Left ventricle myocardium inferior (tissue), 1 donor: ENCODE measurements at regions of chr6 and their contacts with region 1.

Region 1: GRCh38 chr6:38493931-38494547 is 145.7 kb downstream of the BTBD9 start:
- DNase-seq: peak; percentile 47
- H3K4me3 ChIP-seq: no peak overlapping the region
- H3K27ac ChIP-seq: no peak overlapping the region
- H3K4me1 ChIP-seq: peaks cover 3% of the 10 kb centered on the region
- H3K27me3 ChIP-seq: no peaks in the 10 kb centered on the region
- CTCF ChIP-seq: peak; percentile 93

Region 2: DNA sequence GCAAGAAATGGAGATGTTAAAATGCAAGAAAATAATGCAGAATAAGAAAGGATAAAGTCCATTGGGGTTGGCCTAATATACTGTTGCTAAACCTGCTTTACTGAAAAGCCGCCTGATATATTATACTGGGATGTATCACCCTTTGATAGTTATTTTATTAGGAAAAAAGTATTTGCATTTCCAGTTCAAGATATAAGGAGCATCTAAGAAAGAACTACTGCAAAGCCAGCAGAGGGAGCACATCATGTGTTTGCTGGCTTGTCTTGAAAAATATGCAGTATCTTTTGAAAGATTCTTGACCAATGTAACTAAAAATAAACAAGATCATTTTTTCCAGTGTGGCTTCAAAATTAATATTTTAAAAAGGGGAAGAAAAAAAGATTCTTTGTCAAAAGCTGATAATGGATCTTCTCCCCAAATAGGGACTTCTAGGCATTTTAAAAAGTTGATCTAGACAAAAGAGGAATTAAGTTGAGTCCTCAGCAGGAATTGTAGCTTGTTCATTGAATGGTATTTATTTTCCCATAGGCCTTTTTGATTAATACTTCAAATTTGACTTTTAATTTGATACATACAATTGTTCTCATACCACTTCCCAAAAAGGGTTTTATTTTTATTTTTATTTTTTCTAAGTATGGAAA is 459.6 kb before region 1 on chr6:
- intact Hi-C with region 1: loop called (anchors 10 kb)
- DNase-seq: no peak
- H3K4me3 ChIP-seq: no peak overlapping the region
- H3K27ac ChIP-seq: no peak overlapping the region
- H3K4me1 ChIP-seq: peaks cover 31% of the 10 kb centered on the region
- H3K27me3 ChIP-seq: no peaks in the 10 kb centered on the region
- CTCF ChIP-seq: peak; percentile 64

Region 3: DNA sequence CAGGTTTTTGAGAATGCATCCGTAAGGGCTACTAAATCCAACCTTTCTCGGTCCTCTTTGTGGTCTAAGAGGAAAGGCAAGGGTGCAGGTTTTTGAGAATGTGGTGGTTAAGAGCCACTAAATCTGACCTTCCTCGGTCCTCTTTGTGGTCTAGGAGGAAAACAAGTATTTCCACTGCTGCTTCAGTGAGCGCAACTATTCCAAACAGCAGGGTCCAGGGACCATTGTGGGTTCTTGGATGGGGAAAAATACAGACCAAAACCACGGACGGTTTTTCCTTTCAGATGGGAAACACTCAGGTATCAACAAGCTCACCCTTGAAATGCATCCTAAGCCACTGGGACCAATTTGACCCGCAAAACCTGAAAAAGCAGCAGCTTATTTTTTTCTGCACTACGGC is 123.8 kb after region 1 on chr6:
- intact Hi-C with region 1: no loop called
- DNase-seq: no peak
- H3K4me3 ChIP-seq: no peak overlapping the region
- H3K27ac ChIP-seq: no peak overlapping the region
- H3K4me1 ChIP-seq: peaks cover 9% of the 10 kb centered on the region
- H3K27me3 ChIP-seq: no peaks in the 10 kb centered on the region
- CTCF ChIP-seq: no peak